Psoas muscle (tissue), 8 donors: ENCODE measurements at regions of chr3 and their contacts with region 1.

Region 1: GRCh38 chr3:197456261-197457091 is 99.3 kb downstream of the BDH1 start:
- DNase-seq: peak; percentile 91 to 92
- ATAC-seq: peak; percentile 93 to 97 (median 95)
- H3K4me3 ChIP-seq: peak overlapping the region; percentile 77
- H3K27ac ChIP-seq: peak overlapping the region; percentile 48
- H3K4me1 ChIP-seq: peaks cover 10% of the 10 kb centered on the region
- H3K27me3 ChIP-seq: peaks cover 0 to 8% (median 0%) of the 10 kb centered on the region in 3 donors
- CTCF ChIP-seq: no peak

Region 2: GRCh38 chr3:197224034-197224444 is 232.4 kb before region 1 on chr3:
- intact Hi-C with region 1: loop called in 1 of 2 experiments (anchors 2 kb)
- DNase-seq: no peak
- ATAC-seq: peak in 3 of 4 donors; percentile 51 to 74 (median 66)
- H3K4me3 ChIP-seq: no peak overlapping the region
- H3K27ac ChIP-seq: no peak overlapping the region
- H3K4me1 ChIP-seq: peaks cover 37% of the 10 kb centered on the region
- H3K27me3 ChIP-seq: no peaks in the 10 kb centered on the region
- CTCF ChIP-seq: peak; percentile 57

Region 3: GRCh38 chr3:197256836-197257444 is 199.5 kb before region 1 on chr3:
- intact Hi-C with region 1: loop called (anchors 5 to 10 kb)
- DNase-seq: no peak
- ATAC-seq: peak in 1 of 4 donors; percentile 59
- H3K4me3 ChIP-seq: no peak overlapping the region
- H3K27ac ChIP-seq: no peak overlapping the region
- H3K4me1 ChIP-seq: peaks cover 65% of the 10 kb centered on the region
- H3K27me3 ChIP-seq: no peaks in the 10 kb centered on the region
- CTCF ChIP-seq: peak; percentile 74

Region 4: DNA sequence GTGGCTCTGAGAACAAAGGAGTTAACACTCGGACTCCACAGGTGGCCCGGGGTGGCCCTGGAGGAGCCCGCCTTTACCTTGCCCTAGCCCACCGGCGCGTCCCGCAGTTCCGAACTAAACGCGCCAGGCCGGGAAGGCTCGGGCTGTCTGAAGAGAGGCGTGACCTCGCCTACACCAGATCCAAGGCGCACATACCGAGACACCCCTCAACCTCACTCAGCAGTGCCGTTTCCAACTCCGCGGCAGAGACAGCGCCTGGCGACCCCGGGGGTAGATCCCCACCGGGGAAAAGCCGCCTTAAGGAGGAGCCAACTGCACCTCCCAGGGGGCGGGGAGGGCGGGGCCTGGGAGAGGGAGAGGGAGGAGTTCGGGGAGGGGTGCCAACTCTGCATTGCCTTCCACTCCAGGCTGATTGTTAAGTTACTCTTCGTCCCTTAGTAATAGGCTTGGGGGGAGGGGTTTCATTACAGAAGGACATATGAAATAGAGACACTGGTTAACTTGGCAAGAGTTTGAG is 158.1 kb before region 1 on chr3 and contains the start of gene DLG1:
- intact Hi-C with region 1: loop called in 1 of 2 experiments (anchors 10 kb)
- DNase-seq: peak; percentile 88 to 89
- ATAC-seq: peak; percentile 82 to 88 (median 84)
- H3K4me3 ChIP-seq: peak within 1 kb of the TSS; percentile 99
- H3K27ac ChIP-seq: peak within 1 kb of the TSS; percentile 95
- H3K4me1 ChIP-seq: peaks cover 20% of the 10 kb centered on the region
- H3K27me3 ChIP-seq: no peaks in the 10 kb centered on the region
- CTCF ChIP-seq: no peak
- total RNA-seq, gene DLG1: 51.3 to 57.6 (median 52.8) TPM